ENCODE measurements at regions of chr16 and their contacts with region 1.

Region 1: GRCh38 chr16:8868416-8869211 is at the start of gene CARHSP1:
- DNase-seq: no peak
- H3K4me3 ChIP-seq: peak within 1 kb of the TSS; percentile 68
- H3K27ac ChIP-seq: peak within 1 kb of the TSS; percentile 89
- H3K27me3 ChIP-seq: no peaks in the 10 kb centered on the region
- CTCF ChIP-seq: no peak
- polyA plus RNA-seq, gene CARHSP1: 65.5 and 91.1 TPM in 2 replicates

Region 2: DNA sequence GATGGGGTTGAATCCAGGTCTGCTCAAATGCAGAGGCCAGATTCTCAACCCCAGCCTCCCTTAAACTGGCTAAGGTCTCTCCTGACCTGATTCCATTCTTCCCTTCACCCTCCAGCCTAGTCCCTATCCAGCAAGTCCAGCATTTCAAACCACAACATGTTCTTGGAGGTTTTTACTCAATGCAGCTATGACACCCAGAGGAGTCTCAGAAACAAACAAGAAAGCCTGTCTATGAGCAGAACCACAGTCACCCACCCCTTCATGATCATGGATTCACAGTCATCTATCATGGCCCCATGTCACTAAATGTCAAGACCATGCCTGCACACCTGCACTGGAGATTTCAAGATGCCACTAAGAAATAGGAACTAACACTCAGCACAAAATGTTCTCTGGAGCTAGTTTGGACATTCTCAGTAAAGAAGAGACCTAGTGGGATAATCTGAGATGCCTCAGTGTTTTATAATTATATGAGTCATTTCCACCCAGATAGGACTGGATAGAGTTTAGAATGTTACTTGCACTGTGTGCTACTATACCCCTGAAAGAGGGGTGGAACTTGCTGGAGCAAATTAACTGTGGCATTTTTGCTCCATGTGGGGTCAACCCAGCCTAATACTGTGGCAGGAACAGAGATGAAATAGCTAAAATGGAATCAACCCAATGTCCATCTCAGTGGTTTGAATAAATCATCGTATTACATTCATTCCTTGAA is 256.6 kb before region 1 on chr16:
- CTCF ChIA-PET with region 1: no interaction called
- POLR2A ChIA-PET with region 1: no interaction called
- DNase-seq: no peak
- H3K4me3 ChIP-seq: no peak overlapping the region
- H3K27ac ChIP-seq: no peak overlapping the region
- H3K27me3 ChIP-seq: peaks cover 4% of the 10 kb centered on the region
- CTCF ChIP-seq: no peak

Region 3: GRCh38 chr16:8850279-8850885 is 18.2 kb before region 1 on chr16:
- CTCF ChIA-PET with region 1: interaction called, 4 read pairs
- POLR2A ChIA-PET with region 1: interaction called, 13 read pairs
- DNase-seq: no peak
- H3K4me3 ChIP-seq: no peak overlapping the region
- H3K27ac ChIP-seq: peak overlapping the region; percentile 65
- H3K27me3 ChIP-seq: no peaks in the 10 kb centered on the region
- CTCF ChIP-seq: no peak

Region 4: GRCh38 chr16:8885674-8886592 is 17.3 kb after region 1 on chr16:
- CTCF ChIA-PET with region 1: interaction called, 43 read pairs
- POLR2A ChIA-PET with region 1: interaction called, 10 read pairs
- DNase-seq: no peak
- H3K4me3 ChIP-seq: no peak overlapping the region
- H3K27ac ChIP-seq: peak overlapping the region; percentile 91
- H3K27me3 ChIP-seq: no peaks in the 10 kb centered on the region
- CTCF ChIP-seq: peak; percentile 25; the same call in 1 of the 2 replicates

Region 5: GRCh38 chr16:9061358-9061813 is 192.8 kb after region 1 on chr16:
- CTCF ChIA-PET with region 1: no interaction called
- POLR2A ChIA-PET with region 1: no interaction called
- DNase-seq: peak; percentile 74
- H3K4me3 ChIP-seq: no peak overlapping the region
- H3K27ac ChIP-seq: peak overlapping the region; percentile 52
- H3K27me3 ChIP-seq: no peaks in the 10 kb centered on the region
- CTCF ChIP-seq: no peak

Measured in AG04450 (cell line).